Right ventricle myocardium superior (tissue), 1 donor: ENCODE measurements at regions of chr1 and their contacts with region 1.

Region 1: GRCh38 chr1:202348509-202349205 is at the start of gene PPP1R12B:
- DNase-seq: peak; percentile 99
- ATAC-seq: peak; percentile 98
- total RNA-seq, gene PPP1R12B: 636 TPM

Region 2: DNA sequence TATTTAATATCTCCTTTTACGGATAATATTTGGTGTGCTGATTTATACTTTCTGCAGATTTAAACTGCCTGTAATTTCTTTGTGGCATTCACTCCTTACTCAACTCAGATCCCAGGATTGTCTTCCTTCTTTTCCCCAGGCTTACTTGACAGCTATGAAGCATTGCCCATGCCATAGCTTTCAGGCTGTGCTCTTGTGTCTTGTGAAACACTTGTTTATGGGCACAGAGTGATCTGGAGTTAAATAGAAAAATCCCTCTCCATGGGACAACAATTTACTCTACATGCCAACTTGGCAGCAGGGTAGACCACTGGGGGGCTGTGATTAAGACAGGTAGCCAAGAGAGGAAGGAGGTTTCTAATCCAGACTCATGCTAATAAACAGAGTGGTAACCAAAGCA is 57.3 kb after region 1 on chr1:
- intact Hi-C with region 1: loop called (anchors 10 kb)
- DNase-seq: no peak
- ATAC-seq: peak; percentile 19

Region 3: DNA sequence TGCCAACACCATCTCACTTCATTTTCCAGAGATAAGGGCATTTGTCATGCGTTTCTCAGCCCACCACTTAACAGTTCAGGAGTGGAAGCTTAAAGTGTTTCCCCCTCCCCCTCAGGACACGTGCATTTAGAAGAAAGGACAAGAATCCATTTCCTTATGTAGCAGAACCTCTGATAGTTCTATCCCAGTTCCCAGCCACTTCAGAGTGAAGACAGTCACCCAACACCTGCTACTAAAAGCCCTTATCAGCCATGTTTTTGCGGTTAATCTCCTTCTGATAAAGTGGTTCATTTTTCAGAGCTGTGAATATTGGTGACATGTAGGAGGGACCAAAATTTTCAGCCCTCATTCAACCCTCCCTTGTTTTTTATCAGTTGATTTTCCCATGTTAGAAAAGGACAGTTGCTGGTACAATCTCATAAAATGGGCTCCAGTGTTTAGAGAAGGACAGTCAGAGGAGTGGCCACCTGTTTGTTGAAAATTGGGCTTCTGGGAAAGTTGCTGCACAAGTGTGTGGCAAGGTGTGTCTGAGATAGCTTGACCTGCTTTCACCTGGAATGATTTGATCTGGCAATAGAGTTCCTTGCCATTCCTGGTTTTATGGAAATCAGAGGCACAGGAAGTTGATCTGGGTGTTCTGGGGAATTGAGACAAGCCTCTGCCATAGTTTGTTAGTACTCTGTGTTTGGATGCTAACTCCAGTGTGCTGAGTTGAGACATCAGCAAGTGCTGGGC is 113.9 kb after region 1 on chr1:
- intact Hi-C with region 1: loop called (anchors 10 kb)
- DNase-seq: no peak
- ATAC-seq: peak; percentile 70

Region 4: GRCh38 chr1:202710070-202711045 is 361.7 kb after region 1 on chr1 and contains the start of gene SYT2:
- intact Hi-C with region 1: loop called (anchors 10 kb)
- DNase-seq: no peak
- ATAC-seq: peak; percentile 62
- total RNA-seq, gene SYT2: not detected